RWPE1 (cell line): ENCODE measurements at regions of chr11 and their contacts with region 1.

Region 1: GRCh38 chr11:44977476-44977984 is 26.8 kb upstream of the TP53I11 start:
- DNase-seq: no peak
- H3K27ac ChIP-seq: peak overlapping the region; percentile 11; the same call in 1 of the 2 replicates
- CTCF ChIP-seq: no peak

Region 2: GRCh38 chr11:44957040-44957515 is 20.5 kb before region 1 on chr11:
- CTCF ChIA-PET with region 1: no interaction called
- POLR2A ChIA-PET with region 1: interaction called, 14 read pairs
- DNase-seq: no peak
- H3K27ac ChIP-seq: no peak overlapping the region
- CTCF ChIP-seq: no peak

Region 3: GRCh38 chr11:44997566-44997965 is 20.0 kb after region 1 on chr11:
- CTCF ChIA-PET with region 1: no interaction called
- POLR2A ChIA-PET with region 1: no interaction called
- DNase-seq: no peak
- H3K27ac ChIP-seq: no peak overlapping the region
- CTCF ChIP-seq: no peak

Region 4: GRCh38 chr11:45089676-45090499 is 112.4 kb after region 1 on chr11:
- CTCF ChIA-PET with region 1: no interaction called
- POLR2A ChIA-PET with region 1: no interaction called
- DNase-seq: peak; percentile 24
- H3K27ac ChIP-seq: peak overlapping the region; percentile 99
- CTCF ChIP-seq: no peak; the same call in 1 of the 2 replicates